ENCODE measurements at regions of chr1 and their contacts with region 1.

Region 1: GRCh38 chr1:160951443-160952128 is 3.0 kb downstream of the ITLN2 start:
- DNase-seq: no peak
- H3K4me3 ChIP-seq: no peak overlapping the region
- H3K27ac ChIP-seq: no peak overlapping the region
- H3K4me1 ChIP-seq: peaks cover 0 to 9% (median 0%) of the 10 kb centered on the region in 4 donors
- H3K27me3 ChIP-seq: no peaks in the 10 kb centered on the region
- CTCF ChIP-seq: peak in 3 of 4 experiments; percentile 27 to 48 (median 44)
- EP300 ChIP-seq: no peak
- POLR2A ChIP-seq: no peak

Region 2: GRCh38 chr1:160726498-160727315 is 224.9 kb before region 1 on chr1:
- intact Hi-C with region 1: loop called (anchors 5 kb)
- DNase-seq: no peak
- H3K4me3 ChIP-seq: no peak overlapping the region
- H3K27ac ChIP-seq: no peak overlapping the region
- H3K4me1 ChIP-seq: peaks cover 0 to 6% (median 2%) of the 10 kb centered on the region in 4 donors
- H3K27me3 ChIP-seq: no peaks in the 10 kb centered on the region
- CTCF ChIP-seq: peak; percentile 13 to 73 (median 58)
- EP300 ChIP-seq: no peak
- POLR2A ChIP-seq: no peak

Region 3: GRCh38 chr1:160837558-160838205 is 113.9 kb before region 1 on chr1:
- intact Hi-C with region 1: loop called (anchors 5 kb)
- DNase-seq: no peak
- H3K4me3 ChIP-seq: no peak overlapping the region
- H3K27ac ChIP-seq: peak overlapping the region in 2 of 4 donors; percentile 10 to 50
- H3K4me1 ChIP-seq: peaks cover 0 to 6% (median 0%) of the 10 kb centered on the region in 4 donors
- H3K27me3 ChIP-seq: no peaks in the 10 kb centered on the region
- CTCF ChIP-seq: no peak
- EP300 ChIP-seq: no peak
- POLR2A ChIP-seq: no peak

Region 4: GRCh38 chr1:160925652-160926241 is 25.8 kb before region 1 on chr1:
- intact Hi-C with region 1: no loop called
- DNase-seq: no peak
- H3K4me3 ChIP-seq: no peak overlapping the region
- H3K27ac ChIP-seq: no peak overlapping the region
- H3K4me1 ChIP-seq: no peaks in the 10 kb centered on the region
- H3K27me3 ChIP-seq: no peaks in the 10 kb centered on the region
- CTCF ChIP-seq: no peak
- EP300 ChIP-seq: no peak
- POLR2A ChIP-seq: no peak

Region 5: GRCh38 chr1:161001525-161001924 is 49.9 kb after region 1 on chr1:
- intact Hi-C with region 1: no loop called
- DNase-seq: no peak
- H3K4me3 ChIP-seq: no peak overlapping the region
- H3K27ac ChIP-seq: no peak overlapping the region
- H3K4me1 ChIP-seq: no peaks in the 10 kb centered on the region
- H3K27me3 ChIP-seq: no peaks in the 10 kb centered on the region
- CTCF ChIP-seq: no peak
- EP300 ChIP-seq: no peak
- POLR2A ChIP-seq: no peak

Region 6: GRCh38 chr1:161351482-161351881 is 399.9 kb after region 1 on chr1:
- intact Hi-C with region 1: no loop called
- DNase-seq: no peak
- H3K4me3 ChIP-seq: no peak overlapping the region
- H3K27ac ChIP-seq: no peak overlapping the region
- H3K4me1 ChIP-seq: no peaks in the 10 kb centered on the region
- H3K27me3 ChIP-seq: no peaks in the 10 kb centered on the region
- CTCF ChIP-seq: no peak
- EP300 ChIP-seq: peak in 1 of 4 donors; percentile 43
- POLR2A ChIP-seq: no peak